ENCODE measurements at regions of chrX and their contacts with region 1.

Region 1: DNA sequence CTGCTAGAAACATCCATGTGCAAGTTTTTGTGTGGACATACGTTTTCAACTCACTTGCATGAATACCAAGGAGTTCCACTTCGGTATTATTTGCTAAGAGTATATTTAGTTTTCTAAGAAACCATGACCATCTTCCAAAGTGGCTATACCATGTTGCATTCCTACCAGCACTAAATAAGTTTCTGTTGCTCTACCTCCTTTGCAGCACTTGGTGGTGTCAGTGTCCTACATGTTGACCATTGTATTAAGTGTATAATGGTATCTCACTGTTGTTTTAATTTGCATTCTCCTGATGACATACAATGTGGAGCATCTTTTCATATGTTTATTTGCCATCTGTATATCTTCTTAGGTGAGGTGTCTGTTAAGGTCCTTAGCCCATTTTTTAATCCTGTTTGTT is 8.0 kb upstream of the GPRASP1 start:
- DNase-seq: no peak
- ATAC-seq: no peak
- H3K4me3 ChIP-seq: no peak overlapping the region
- H3K4me3 Mint-ChIP-seq: no peak overlapping the region
- H3K27ac ChIP-seq: no peak overlapping the region
- H3K27ac Mint-ChIP-seq: no peak overlapping the region
- H3K4me1 ChIP-seq: no peaks in the 10 kb centered on the region
- H3K4me1 Mint-ChIP-seq: peaks cover 0 to 5% (median 0%) of the 10 kb centered on the region in 7 donors
- H3K27me3 ChIP-seq: no peaks in the 10 kb centered on the region
- H3K27me3 Mint-ChIP-seq: no peaks in the 10 kb centered on the region

Region 2: GRCh38 chrX:102835504-102836146 is 192.3 kb after region 1 on chrX:
- CTCF ChIA-PET with region 1: no interaction called
- POLR2A ChIA-PET with region 1: no interaction called
- intact Hi-C with region 1: loop called in 1 of 2 experiments (anchors 1 kb)
- DNase-seq: peak in 5 of 9 donors; percentile 2 to 17 (median 11)
- ATAC-seq: no peak
- H3K4me3 ChIP-seq: no peak overlapping the region
- H3K4me3 Mint-ChIP-seq: no peak overlapping the region
- H3K27ac ChIP-seq: no peak overlapping the region
- H3K27ac Mint-ChIP-seq: no peak overlapping the region
- H3K4me1 ChIP-seq: no peaks in the 10 kb centered on the region
- H3K4me1 Mint-ChIP-seq: no peaks in the 10 kb centered on the region
- H3K27me3 ChIP-seq: no peaks in the 10 kb centered on the region
- H3K27me3 Mint-ChIP-seq: no peaks in the 10 kb centered on the region

Region 3: GRCh38 chrX:103293118-103293517 is 649.8 kb after region 1 on chrX:
- CTCF ChIA-PET with region 1: no interaction called
- POLR2A ChIA-PET with region 1: no interaction called
- intact Hi-C with region 1: no loop called
- DNase-seq: no peak
- ATAC-seq: no peak
- H3K4me3 ChIP-seq: no peak overlapping the region
- H3K4me3 Mint-ChIP-seq: no peak overlapping the region
- H3K27ac ChIP-seq: no peak overlapping the region
- H3K27ac Mint-ChIP-seq: no peak overlapping the region
- H3K4me1 ChIP-seq: no peaks in the 10 kb centered on the region
- H3K4me1 Mint-ChIP-seq: no peaks in the 10 kb centered on the region
- H3K27me3 ChIP-seq: no peaks in the 10 kb centered on the region
- H3K27me3 Mint-ChIP-seq: peaks cover 0 to 9% (median 4%) of the 10 kb centered on the region in 5 donors